ENCODE measurements at regions of chr9 and their contacts with region 1.

Region 1: GRCh38 chr9:111766066-111766465 is 28.7 kb downstream of the SHOC1 start:
- DNase-seq: no peak
- H3K4me3 ChIP-seq: no peak overlapping the region
- H3K27ac ChIP-seq: no peak overlapping the region
- H3K4me1 ChIP-seq: no peaks in the 10 kb centered on the region
- H3K27me3 ChIP-seq: no peaks in the 10 kb centered on the region
- CTCF ChIP-seq: no peak
- EP300 ChIP-seq: no peak
- POLR2A ChIP-seq: no peak

Region 2: DNA sequence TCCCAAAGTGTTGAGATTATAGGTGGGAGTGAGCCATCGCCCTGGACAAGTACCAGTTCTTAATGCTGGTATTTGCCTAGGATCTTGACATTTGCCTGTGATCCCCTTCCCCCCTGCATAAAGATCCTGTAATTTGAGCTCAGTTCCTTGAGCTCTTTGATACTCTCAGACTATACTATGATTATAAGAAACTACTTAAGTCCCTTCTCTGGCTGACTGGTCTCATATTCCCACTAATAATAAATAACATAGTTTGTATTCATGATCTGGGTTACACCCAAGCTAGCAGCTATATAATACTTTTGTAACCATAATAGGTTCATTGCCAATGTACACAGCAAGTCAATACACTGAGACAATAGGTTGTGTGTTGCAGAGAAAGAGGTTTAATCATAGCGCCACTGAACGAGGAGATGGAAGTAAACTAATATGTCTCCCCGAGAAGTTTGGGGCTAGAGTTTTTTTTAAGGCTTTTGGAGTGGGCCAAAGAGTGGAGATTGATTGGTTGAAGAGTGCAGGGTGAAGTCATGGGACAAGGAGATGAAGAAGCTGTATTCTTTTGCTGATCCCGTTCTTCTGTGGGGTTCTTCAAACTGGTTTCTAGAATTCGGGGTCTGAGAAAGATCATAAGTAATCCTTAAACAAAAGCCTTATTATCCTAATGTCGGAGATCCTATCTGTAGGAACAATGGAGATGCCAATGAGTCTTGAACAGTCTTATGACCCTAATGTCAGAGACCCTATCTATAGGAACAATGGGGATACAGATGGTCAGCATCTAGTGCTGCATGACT is 49.4 kb after region 1 on chr9:
- in situ Hi-C with region 1: no loop called
- intact Hi-C with region 1: no loop called
- DNase-seq: no peak
- H3K4me3 ChIP-seq: no peak overlapping the region
- H3K27ac ChIP-seq: no peak overlapping the region
- H3K4me1 ChIP-seq: no peaks in the 10 kb centered on the region
- H3K27me3 ChIP-seq: no peaks in the 10 kb centered on the region
- CTCF ChIP-seq: no peak
- EP300 ChIP-seq: no peak
- POLR2A ChIP-seq: no peak

Region 3: DNA sequence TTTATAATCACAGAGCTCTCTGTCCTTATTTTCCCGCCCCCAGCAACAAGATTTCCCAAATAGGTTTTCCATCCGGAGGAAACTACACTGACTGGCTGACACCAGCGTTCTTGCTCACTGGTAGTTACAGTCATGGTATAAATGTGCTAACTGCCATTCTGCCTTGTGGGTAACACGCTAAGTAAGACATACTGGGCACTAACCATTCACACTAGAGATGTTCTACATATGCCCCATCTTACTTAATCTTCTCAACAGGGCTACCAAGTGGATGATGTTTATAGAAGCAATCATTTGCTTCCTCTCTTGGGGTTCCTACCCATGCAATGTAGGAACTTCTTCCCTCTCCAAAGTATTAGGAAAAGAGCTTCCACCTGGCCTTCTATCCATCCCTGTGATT is 297.5 kb after region 1 on chr9:
- in situ Hi-C with region 1: no loop called
- intact Hi-C with region 1: no loop called
- DNase-seq: no peak
- H3K4me3 ChIP-seq: no peak overlapping the region
- H3K27ac ChIP-seq: peak overlapping the region in 2 of 4 donors; percentile 57 to 82
- H3K4me1 ChIP-seq: peaks cover 5 to 66% (median 46%) of the 10 kb centered on the region in 4 donors
- H3K27me3 ChIP-seq: no peaks in the 10 kb centered on the region
- CTCF ChIP-seq: no peak
- EP300 ChIP-seq: no peak
- POLR2A ChIP-seq: no peak

Region 4: DNA sequence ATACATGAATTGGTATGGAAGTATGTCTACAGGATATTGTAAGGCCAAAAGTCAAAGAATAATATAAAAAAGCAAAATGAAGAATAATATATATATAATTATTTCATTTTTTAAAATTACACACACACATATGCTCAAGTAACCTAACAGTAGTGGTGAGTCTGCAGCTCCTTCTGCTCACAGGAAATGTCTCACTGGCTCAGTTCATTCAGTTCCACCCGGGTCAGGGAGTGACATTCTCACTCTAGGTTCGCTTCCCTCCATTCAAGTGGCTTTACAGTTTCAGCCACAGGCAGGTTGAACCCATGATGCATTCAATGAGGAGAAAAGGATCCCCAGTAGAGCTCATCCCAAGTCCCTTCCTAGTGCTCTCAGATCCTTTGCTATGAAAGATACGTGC is 318.3 kb after region 1 on chr9:
- in situ Hi-C with region 1: loop called in 3 of 4 experiments (anchors 5 kb)
- intact Hi-C with region 1: no loop called
- DNase-seq: no peak
- H3K4me3 ChIP-seq: no peak overlapping the region
- H3K27ac ChIP-seq: no peak overlapping the region
- H3K4me1 ChIP-seq: no peaks in the 10 kb centered on the region
- H3K27me3 ChIP-seq: no peaks in the 10 kb centered on the region
- CTCF ChIP-seq: no peak
- EP300 ChIP-seq: no peak
- POLR2A ChIP-seq: no peak